Calu3 (cell line): ENCODE measurements at regions of chr1 and their contacts with region 1.

Region 1: DNA sequence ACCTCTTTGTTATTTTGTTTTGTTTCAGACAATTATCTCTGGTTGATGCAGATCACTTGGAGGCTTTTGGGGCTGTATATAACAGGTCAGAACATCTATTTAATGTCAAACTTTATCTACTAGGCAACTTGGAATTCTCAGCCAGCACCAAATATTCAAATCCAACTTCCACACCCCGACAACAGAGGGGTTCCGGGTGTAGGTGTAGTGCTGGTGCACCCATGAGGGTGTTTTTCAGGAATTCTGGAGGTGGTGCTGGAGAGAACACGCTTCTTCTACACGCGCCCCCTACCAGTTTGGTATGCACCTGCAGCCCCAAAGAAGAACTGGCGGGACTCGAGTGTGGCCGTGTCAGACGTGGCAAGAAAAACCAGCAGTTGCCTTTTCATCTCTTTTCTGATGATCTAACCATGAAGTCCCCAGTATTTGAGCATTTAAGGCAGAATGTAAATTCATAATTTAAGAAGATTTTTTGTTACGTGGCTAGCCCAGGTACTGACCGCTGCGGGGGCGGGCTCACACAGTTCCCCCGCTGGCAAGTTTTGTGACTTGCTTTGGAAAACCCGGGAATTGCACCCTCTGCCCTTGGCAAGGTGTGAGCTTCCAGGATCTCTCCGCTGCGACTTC is 462 bp upstream of the TLCD4 start:
- DNase-seq: peak; percentile 84
- H3K4me3 Mint-ChIP-seq: peak overlapping the region; percentile 71
- H3K27ac Mint-ChIP-seq: peak overlapping the region; percentile 45
- H3K4me1 Mint-ChIP-seq: peaks cover 33% of the 10 kb centered on the region
- H3K27me3 Mint-ChIP-seq: no peaks in the 10 kb centered on the region
- CTCF ChIP-seq: peak; percentile 70

Region 2: GRCh38 chr1:95084317-95085176 is 32.1 kb before region 1 on chr1:
- CTCF ChIA-PET with region 1: interaction called, 4 read pairs
- intact Hi-C with region 1: loop called (anchors 5 kb)
- DNase-seq: peak; percentile 22
- H3K4me3 Mint-ChIP-seq: no peak overlapping the region
- H3K27ac Mint-ChIP-seq: no peak overlapping the region
- H3K4me1 Mint-ChIP-seq: peaks cover 30% of the 10 kb centered on the region
- H3K27me3 Mint-ChIP-seq: no peaks in the 10 kb centered on the region
- CTCF ChIP-seq: peak; percentile 82

Region 3: DNA sequence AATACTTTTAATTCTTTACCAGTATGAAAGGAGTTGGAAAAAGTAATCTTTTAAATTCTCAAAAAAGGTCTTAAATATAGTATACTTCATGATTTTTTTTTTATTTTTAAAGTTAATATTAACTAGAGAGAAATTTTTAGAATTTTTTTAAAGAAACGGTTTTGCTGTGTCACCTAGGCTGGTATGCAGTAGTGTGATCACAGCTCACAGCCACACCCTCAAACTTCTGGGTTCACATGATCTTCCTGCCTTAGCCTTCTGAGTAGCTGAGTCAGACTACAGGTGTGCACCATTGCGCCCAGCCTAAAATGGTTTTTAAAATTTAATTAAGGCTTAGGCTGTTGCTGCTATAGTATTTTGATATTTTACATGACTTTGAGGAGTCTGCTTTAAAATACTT is 52.9 kb after region 1 on chr1:
- CTCF ChIA-PET with region 1: no interaction called
- intact Hi-C with region 1: loop called (anchors 5 kb)
- DNase-seq: peak; percentile 73
- H3K4me3 Mint-ChIP-seq: peak overlapping the region; percentile 53
- H3K27ac Mint-ChIP-seq: peak overlapping the region; percentile 77
- H3K4me1 Mint-ChIP-seq: peaks cover 52% of the 10 kb centered on the region
- H3K27me3 Mint-ChIP-seq: no peaks in the 10 kb centered on the region
- CTCF ChIP-seq: no peak